ENCODE measurements at regions of chr19 and their contacts with region 1.

Region 1: DNA sequence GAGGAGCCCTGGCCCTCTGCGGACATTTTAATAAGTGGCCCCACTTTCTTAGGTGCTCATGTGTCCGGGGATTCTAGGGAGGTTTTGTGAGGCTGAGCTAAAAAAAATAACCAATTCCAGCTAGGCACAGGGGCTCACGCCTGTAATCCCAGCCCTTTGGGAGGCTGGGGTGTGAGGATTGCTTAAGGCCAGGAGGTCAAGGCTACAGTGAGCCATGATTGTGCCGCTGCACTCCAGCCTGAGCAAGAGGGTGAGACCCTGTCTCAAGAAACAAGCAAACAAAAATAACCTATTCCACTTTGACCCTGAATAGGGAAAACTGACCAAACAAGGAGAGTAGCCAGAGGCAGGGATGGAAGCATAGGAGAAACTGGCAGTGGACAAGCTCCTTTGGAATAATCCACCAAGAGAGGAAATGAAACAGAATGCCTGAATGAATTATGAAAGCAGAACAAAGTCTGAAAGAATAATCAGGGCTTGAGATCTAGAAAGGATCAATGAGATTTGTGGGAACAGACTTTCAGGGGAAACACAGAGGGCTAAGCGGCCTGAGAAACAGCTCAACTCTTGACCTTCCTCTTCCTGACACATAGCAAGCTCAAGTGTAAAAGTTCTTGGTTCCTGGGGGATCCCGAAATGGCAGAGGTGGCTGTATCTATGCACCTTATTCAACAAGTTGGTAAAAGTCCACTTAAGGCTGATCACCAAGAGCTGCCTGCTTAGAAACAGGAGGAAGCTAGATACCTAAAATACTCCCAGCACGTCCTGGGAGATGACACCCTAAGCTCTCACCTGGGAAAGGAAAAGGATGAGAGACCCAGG is 30.1 kb upstream of the FFAR2 start:
- DNase-seq: peak; percentile 88
- ATAC-seq: peak; percentile 63
- H3K4me3 ChIP-seq: no peak overlapping the region; the same call in 1 of the 2 replicates
- H3K27ac ChIP-seq: peak overlapping the region; percentile 68
- H3K4me1 ChIP-seq: peaks cover 41% of the 10 kb centered on the region
- H3K27me3 ChIP-seq: no peaks in the 10 kb centered on the region
- CTCF ChIP-seq: no peak
- EP300 ChIP-seq: peak; percentile 55 to 60; a peak in 2 of 4 replicates
- POLR2A ChIP-seq: no peak
- RAD21 ChIP-seq: peak; percentile 15; the same call in 1 of the 2 replicates

Region 2: GRCh38 chr19:35375505-35376307 is 42.2 kb before region 1 on chr19:
- CTCF ChIA-PET with region 1: interaction called, 6 read pairs
- POLR2A ChIA-PET with region 1: interaction called, 52 read pairs
- RAD21 ChIA-PET with region 1: interaction called, 90 read pairs
- SMC1A ChIA-PET with region 1: interaction called, 41 read pairs
- in situ Hi-C with region 1: no loop called
- intact Hi-C with region 1: loop called (anchors 5 kb)
- DNase-seq: no peak
- ATAC-seq: peak; percentile 36; the same call in 2 of the 3 replicates
- H3K4me3 ChIP-seq: no peak overlapping the region
- H3K27ac ChIP-seq: peak overlapping the region; percentile 51; the same call in 1 of the 2 replicates
- H3K4me1 ChIP-seq: peaks cover 31% of the 10 kb centered on the region
- H3K27me3 ChIP-seq: no peaks in the 10 kb centered on the region
- CTCF ChIP-seq: no peak
- EP300 ChIP-seq: no peak
- POLR2A ChIP-seq: no peak
- RAD21 ChIP-seq: no peak

Region 3: GRCh38 chr19:35442091-35442490 is 24.2 kb after region 1 on chr19:
- CTCF ChIA-PET with region 1: interaction called, 3 read pairs
- POLR2A ChIA-PET with region 1: interaction called, 3 read pairs
- RAD21 ChIA-PET with region 1: interaction called, 18 read pairs
- SMC1A ChIA-PET with region 1: interaction called, 17 read pairs
- in situ Hi-C with region 1: no loop called
- intact Hi-C with region 1: no loop called
- DNase-seq: no peak
- ATAC-seq: peak; percentile 65
- H3K4me3 ChIP-seq: no peak overlapping the region
- H3K27ac ChIP-seq: no peak overlapping the region; the same call in 1 of the 2 replicates
- H3K4me1 ChIP-seq: peaks cover 33% of the 10 kb centered on the region
- H3K27me3 ChIP-seq: no peaks in the 10 kb centered on the region
- CTCF ChIP-seq: no peak
- EP300 ChIP-seq: no peak
- POLR2A ChIP-seq: no peak
- RAD21 ChIP-seq: no peak

Region 4: DNA sequence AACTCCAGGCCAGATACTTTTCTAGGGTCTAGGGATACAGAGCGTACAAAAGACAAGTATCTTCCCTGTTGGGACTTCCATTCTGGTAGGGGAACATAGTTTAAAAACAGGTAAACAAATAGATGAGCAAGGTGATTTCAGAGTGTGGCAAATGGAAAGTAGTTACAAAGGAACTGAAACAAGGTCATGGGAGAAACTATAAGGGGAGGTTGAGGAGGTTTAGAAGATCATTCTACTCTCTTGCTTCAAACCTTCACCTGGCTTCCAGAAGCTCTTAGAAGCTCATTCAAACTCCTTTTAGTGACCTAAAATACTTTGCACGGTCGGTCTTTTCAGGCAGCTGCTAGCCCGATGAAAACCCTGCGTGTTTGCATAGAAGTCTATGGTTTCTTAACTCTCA is 39.2 kb after region 1 on chr19:
- CTCF ChIA-PET with region 1: interaction called, 86 read pairs
- POLR2A ChIA-PET with region 1: interaction called, 37 read pairs
- RAD21 ChIA-PET with region 1: interaction called, 110 read pairs
- SMC1A ChIA-PET with region 1: interaction called, 237 read pairs
- in situ Hi-C with region 1: no loop called
- intact Hi-C with region 1: no loop called
- DNase-seq: peak; percentile 68
- ATAC-seq: peak; percentile 37
- H3K4me3 ChIP-seq: no peak overlapping the region
- H3K27ac ChIP-seq: peak overlapping the region; percentile 89
- H3K4me1 ChIP-seq: peaks cover 63% of the 10 kb centered on the region
- H3K27me3 ChIP-seq: no peaks in the 10 kb centered on the region
- CTCF ChIP-seq: no peak
- EP300 ChIP-seq: peak; percentile 19 to 48; a peak in 2 of 4 replicates
- POLR2A ChIP-seq: no peak
- RAD21 ChIP-seq: no peak

Region 5: GRCh38 chr19:35468637-35469036 is 50.7 kb after region 1 on chr19:
- CTCF ChIA-PET with region 1: interaction called, 86 read pairs
- POLR2A ChIA-PET with region 1: interaction called, 37 read pairs
- RAD21 ChIA-PET with region 1: interaction called, 110 read pairs
- SMC1A ChIA-PET with region 1: interaction called, 237 read pairs
- in situ Hi-C with region 1: no loop called
- intact Hi-C with region 1: loop called (anchors 1 kb)
- DNase-seq: peak; percentile 82
- ATAC-seq: peak; percentile 100
- H3K4me3 ChIP-seq: no peak overlapping the region
- H3K27ac ChIP-seq: 0 out of 2 replicates have a peak overlapping the region, but pooled peaks have one; percentile 6
- H3K4me1 ChIP-seq: peaks cover 9% of the 10 kb centered on the region
- H3K27me3 ChIP-seq: no peaks in the 10 kb centered on the region
- CTCF ChIP-seq: peak; percentile 85 to 96 (median 93); a peak in 5 of 6 replicates
- EP300 ChIP-seq: peak in 1 of 2 experiments; percentile 65; a peak in 2 of 4 replicates
- POLR2A ChIP-seq: no peak
- RAD21 ChIP-seq: peak; percentile 99